A549 (cell line): ENCODE measurements at regions of chr19 and their contacts with region 1.

Region 1: DNA sequence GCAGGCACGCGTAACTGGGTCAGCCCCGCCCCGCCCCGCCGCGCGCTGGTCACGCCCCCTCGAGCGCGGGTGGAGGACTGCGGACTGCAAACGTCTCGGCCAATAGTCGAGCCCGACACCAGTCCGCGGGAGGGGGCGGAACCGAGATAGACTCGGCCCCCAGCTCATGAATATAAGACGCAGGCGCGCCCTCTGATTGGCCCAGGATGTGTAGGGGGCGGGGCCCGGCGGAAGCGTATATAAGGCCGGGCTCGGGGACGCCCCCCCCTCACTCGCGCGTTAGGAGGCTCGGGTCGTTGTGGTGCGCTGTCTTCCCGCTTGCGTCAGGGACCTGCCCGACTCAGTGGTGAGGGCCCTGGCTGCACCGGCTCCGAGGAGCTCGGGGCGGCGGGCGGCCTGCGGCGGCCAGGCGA is at the start of gene CIRBP:
- DNase-seq: peak; percentile 81 to 98
- ATAC-seq: peak; percentile 32 to 64
- H3K4me3 ChIP-seq: peak within 1 kb of the TSS; percentile 81
- H3K27ac ChIP-seq: peak within 1 kb of the TSS; percentile 100
- H3K4me1 ChIP-seq: peaks cover 63% of the 10 kb centered on the region
- CTCF ChIP-seq: no peak
- EP300 ChIP-seq: no peak
- POLR2A ChIP-seq: peak; percentile 92
- RAD21 ChIP-seq: no peak
- polyA plus RNA-seq, gene CIRBP: 92.4 and 151 TPM in 2 replicates

Region 2: DNA sequence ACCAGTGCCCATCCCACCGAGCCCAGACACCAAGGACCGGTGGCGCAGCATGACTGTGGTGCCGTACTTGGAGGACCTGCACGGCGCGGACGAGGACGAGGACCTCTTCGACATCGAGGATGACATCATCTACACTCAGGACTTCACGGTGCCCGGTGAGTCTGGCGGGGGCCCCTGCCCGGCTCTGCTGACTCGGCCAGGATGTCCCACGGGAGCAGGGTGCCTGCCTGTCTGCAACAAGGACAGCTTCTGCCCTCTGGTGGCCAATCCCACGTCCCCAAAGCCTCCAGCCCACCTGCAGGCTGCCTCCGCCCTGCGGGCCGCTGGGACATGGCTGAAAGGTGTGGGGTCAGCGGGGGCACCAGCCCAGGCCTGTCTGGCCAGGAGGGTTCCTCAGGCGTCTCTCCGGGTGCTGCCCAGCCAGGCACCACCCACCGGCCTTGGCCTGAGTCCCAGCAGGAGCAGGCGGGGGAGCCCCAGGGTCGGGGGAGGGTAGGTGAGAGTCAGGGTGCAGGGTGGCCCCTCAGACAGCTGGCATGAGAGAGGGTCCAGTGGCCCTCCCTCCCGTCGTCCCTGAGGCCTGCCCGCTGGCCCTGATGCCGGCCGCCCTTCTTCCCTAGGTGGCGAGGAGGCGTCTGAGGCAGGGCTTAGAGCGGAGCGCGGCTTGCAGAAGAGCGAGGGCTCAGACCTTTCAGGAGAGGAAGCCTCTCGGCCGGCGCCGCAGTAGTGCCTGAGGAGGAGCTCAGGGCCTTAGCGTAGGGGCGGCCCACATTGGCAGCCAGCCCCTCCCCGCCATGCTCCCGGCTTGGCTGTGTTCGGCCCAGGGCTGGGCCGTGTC is 45.8 kb before region 1 on chr19:
- CTCF ChIA-PET with region 1: interaction called, 16 read pairs
- POLR2A ChIA-PET with region 1: no interaction called
- DNase-seq: peak in 1 of 2 experiments; percentile 61
- ATAC-seq: peak; percentile 52 to 73; a peak in 4 of 6 replicates
- H3K4me3 ChIP-seq: no peak overlapping the region
- H3K27ac ChIP-seq: peak overlapping the region in 1 of 2 experiments; percentile 43; a peak in 2 of 6 replicates
- H3K4me1 ChIP-seq: peaks cover 14% of the 10 kb centered on the region; the same call in 1 of the 3 replicates
- CTCF ChIP-seq: peak; percentile 52; the same call in 2 of the 3 replicates
- EP300 ChIP-seq: no peak
- POLR2A ChIP-seq: no peak
- RAD21 ChIP-seq: peak; percentile 50 to 54

Region 3: GRCh38 chr19:1241417-1242095 is 27.5 kb before region 1 on chr19 and contains the start of gene ATP5F1D:
- CTCF ChIA-PET with region 1: interaction called, 500 read pairs
- POLR2A ChIA-PET with region 1: interaction called, 98 read pairs
- DNase-seq: peak; percentile 83 to 94
- ATAC-seq: peak; percentile 51 to 66
- H3K4me3 ChIP-seq: peak within 1 kb of the TSS; percentile 77
- H3K27ac ChIP-seq: peak within 1 kb of the TSS; percentile 89 to 100
- H3K4me1 ChIP-seq: peaks cover 49% of the 10 kb centered on the region
- CTCF ChIP-seq: no peak
- EP300 ChIP-seq: no peak
- POLR2A ChIP-seq: peak; percentile 71
- RAD21 ChIP-seq: no peak
- polyA plus RNA-seq, gene ATP5F1D: 18.5 and 28.7 TPM in 2 replicates

Region 4: DNA sequence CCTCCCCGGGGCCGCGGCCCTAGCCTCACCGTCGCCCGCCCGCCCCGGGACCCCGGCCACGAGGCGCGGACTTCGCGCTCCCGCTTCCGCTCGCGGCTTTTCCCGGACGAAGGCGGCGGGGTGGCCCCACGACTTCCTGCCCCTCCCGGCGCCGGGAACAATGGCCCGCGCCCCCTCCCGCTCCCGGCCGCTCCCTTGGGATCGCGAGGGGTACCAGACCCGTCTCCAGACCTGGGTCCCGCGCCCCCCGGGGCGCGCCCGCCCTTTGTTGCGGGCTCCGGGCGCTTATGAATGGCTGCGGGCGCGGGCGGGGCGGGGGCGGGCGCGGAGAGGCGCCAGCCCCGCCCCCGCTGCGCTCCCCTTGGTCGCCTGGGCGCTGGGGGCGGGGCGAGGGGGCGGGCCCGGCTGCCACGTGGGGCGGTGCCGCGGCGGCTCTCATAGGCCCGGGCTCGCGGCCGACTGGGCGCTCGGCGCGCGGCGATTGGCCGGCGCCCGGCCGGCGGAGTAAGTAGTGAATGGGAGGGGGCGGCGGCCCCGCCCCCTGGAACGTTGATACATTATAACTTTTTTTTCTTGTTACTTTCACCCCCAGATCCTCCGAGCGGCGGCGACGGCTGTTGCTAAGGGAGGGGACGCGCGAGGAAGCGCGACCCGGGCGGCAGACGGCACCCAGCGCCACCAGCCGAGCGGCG is 19.6 kb before region 1 on chr19:
- CTCF ChIA-PET with region 1: interaction called, 500 read pairs
- POLR2A ChIA-PET with region 1: interaction called, 98 read pairs
- DNase-seq: peak in 1 of 2 experiments; percentile 93
- ATAC-seq: peak; percentile 2 to 5; a peak in 4 of 6 replicates
- H3K4me3 ChIP-seq: peak overlapping the region; percentile 97
- H3K27ac ChIP-seq: peak overlapping the region; percentile 100
- H3K4me1 ChIP-seq: peaks cover 41% of the 10 kb centered on the region
- CTCF ChIP-seq: no peak; the same call in 2 of the 3 replicates
- EP300 ChIP-seq: no peak
- POLR2A ChIP-seq: peak; percentile 91
- RAD21 ChIP-seq: no peak

Region 5: GRCh38 chr19:1383311-1384084 is 114.4 kb after region 1 on chr19 and contains the start of gene NDUFS7:
- CTCF ChIA-PET with region 1: no interaction called
- POLR2A ChIA-PET with region 1: interaction called, 10 read pairs
- DNase-seq: peak; percentile 47 to 93
- ATAC-seq: peak; percentile 86 to 87
- H3K4me3 ChIP-seq: peak within 1 kb of the TSS; percentile 82
- H3K27ac ChIP-seq: peak within 1 kb of the TSS; percentile 78 to 96
- H3K4me1 ChIP-seq: peaks cover 4% of the 10 kb centered on the region; the same call in 1 of the 3 replicates
- CTCF ChIP-seq: 0 out of 3 replicates have a peak, but pooled peaks have one; percentile 12
- EP300 ChIP-seq: no peak
- POLR2A ChIP-seq: peak; percentile 23; the same call in 1 of the 2 replicates
- RAD21 ChIP-seq: peak in 1 of 2 experiments; percentile 17; a peak in 1 of 5 replicates
- polyA plus RNA-seq, gene NDUFS7: 18.6 and 19.3 TPM in 2 replicates